WTC11 (cell line): ENCODE measurements at regions of chr14 and their contacts with region 1.

Region 1: DNA sequence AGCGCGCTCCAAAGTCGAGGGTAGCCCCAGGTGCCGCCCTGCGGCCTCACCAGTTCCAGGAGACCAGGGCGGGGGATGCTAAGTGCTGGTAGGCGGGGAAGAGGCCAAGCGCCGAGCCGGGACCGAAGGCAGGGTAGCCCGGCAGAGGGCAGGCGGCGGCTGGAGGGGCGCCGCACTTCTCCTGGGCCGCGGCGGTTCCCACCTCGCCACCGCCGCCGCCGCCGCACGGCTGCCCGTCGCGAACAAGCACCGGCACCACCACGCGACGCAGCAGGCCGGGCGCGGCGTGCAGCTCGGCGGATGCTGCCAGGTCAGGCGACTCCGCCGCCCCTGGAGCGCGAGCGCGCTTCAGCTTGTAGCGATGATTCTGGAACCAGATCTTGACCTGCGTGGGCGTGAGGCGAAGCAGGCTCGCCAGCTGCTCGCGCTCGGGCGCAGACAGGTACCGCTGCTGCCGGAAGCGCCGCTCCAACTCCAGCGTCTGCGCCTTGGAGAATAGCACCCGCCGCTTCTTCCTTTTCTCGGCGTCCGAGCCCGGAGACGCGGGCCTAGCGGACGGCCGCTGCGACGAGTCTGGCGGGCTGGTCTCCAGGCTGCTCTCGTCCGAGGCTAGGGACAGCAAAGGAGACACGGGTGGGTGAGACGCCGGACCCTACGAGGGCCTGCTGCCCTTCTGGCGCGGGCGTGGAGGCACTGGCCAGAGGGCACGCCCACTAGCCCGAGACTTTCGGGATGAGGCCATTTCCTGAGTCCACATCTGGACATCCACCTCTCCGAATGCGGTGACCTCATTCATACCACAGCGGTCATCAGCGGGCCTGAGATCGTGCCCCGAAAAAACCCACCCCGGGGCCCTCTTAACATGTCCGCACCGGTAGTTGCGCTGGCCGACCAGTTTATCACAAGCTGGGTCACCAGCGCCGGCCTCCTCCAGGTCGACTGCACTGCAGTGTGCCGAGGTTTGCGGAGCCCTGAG is 1.3 kb downstream of the NKX2-8 start:
- DNase-seq: peak; percentile 61
- ATAC-seq: peak; percentile 52
- H3K4me3 Mint-ChIP-seq: peak overlapping the region; percentile 60
- H3K27ac Mint-ChIP-seq: no peak overlapping the region
- H3K4me1 Mint-ChIP-seq: peaks cover 29% of the 10 kb centered on the region
- H3K27me3 Mint-ChIP-seq: no peaks in the 10 kb centered on the region; the same call in 1 of the 2 replicates
- CTCF ChIP-seq: no peak

Region 2: DNA sequence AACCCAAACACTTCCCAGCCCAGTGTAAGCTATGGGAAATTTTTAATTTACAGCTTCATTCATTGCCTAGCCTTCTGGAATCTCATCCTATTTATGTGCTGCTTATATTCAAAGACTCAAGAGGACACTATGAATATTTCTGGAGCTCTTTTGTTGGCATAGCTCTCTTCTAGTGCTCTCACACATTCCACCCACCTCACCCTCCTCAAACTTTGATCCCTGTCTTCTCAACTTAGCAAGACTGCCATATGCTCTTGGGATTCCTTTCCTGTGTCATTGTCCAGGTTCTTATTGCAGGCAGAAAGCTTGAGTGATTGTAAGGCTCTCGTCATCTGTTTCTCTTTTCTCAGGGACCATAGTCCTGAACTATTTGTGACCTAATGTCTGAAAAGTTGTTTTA is 43.1 kb before region 1 on chr14:
- CTCF ChIA-PET with region 1: no interaction called
- POLR2A ChIA-PET with region 1: no interaction called
- DNase-seq: no peak
- ATAC-seq: no peak
- H3K4me3 Mint-ChIP-seq: no peak overlapping the region
- H3K27ac Mint-ChIP-seq: no peak overlapping the region
- H3K4me1 Mint-ChIP-seq: no peaks in the 10 kb centered on the region
- H3K27me3 Mint-ChIP-seq: peaks cover 55% of the 10 kb centered on the region
- CTCF ChIP-seq: no peak

Region 3: DNA sequence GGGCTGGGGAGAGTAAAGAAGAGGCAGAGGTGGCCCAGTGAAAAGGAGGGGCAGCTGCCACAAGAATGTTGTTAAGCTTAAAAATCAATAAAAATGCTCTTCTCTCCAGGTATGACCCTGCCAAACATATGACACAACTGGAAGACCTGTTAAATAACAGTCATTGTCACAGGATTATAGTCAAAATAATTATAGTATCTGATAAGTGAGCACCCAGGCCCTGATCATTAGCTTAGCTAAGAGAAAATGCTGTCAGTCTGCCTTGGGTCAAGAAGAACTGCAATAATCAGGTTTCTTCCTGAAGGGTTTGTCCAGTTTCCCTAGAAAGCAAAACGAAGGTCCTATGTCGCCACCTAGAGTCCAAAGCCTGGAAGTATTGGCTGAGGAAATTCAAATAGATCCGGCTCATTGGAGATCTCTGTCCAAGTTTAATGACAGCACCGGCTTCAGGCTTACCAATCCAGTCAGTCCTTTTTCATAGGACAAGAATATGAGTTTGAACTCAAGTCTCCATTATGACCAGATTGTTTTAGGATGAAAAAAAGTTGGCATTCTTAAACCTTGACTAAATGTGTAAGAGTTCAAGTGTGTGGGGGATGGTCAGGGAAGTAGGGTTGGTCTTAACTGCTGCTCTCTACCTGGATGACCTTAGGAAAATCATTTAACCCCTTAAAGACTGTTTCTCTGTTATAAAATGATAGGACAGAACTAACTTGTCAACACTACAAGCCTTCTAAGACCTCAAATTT is 23.8 kb after region 1 on chr14:
- CTCF ChIA-PET with region 1: interaction called, 11 read pairs
- POLR2A ChIA-PET with region 1: no interaction called
- DNase-seq: peak; percentile 60
- ATAC-seq: peak; percentile 83
- H3K4me3 Mint-ChIP-seq: peak overlapping the region; percentile 57
- H3K27ac Mint-ChIP-seq: no peak overlapping the region
- H3K4me1 Mint-ChIP-seq: peaks cover 12% of the 10 kb centered on the region
- H3K27me3 Mint-ChIP-seq: peaks cover 39% of the 10 kb centered on the region
- CTCF ChIP-seq: peak; percentile 48

Region 4: GRCh38 chr14:36626151-36626550 is 45.0 kb after region 1 on chr14:
- CTCF ChIA-PET with region 1: no interaction called
- POLR2A ChIA-PET with region 1: no interaction called
- DNase-seq: no peak
- ATAC-seq: no peak
- H3K4me3 Mint-ChIP-seq: no peak overlapping the region
- H3K27ac Mint-ChIP-seq: no peak overlapping the region
- H3K4me1 Mint-ChIP-seq: peaks cover 6% of the 10 kb centered on the region; the same call in 1 of the 2 replicates
- H3K27me3 Mint-ChIP-seq: peaks cover 12% of the 10 kb centered on the region
- CTCF ChIP-seq: no peak

Region 5: DNA sequence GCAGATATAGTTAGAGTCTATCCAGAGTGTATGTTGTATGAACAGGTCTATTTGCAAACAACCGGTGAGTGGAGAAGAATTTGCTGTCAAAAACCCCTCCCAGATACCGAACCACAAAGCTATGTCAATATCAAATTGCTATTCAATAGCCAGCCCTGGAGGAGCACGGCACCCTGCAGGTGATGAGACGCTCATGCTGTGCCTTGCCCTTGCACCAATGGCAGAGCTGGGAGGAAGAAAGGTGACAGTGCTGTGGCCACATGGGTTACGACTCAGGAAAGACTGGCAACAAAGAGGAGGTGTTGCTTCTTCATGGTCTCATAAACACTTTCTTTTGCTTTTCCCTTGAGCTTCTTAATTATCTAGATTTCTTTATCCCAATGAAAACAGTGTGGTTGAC is 136.2 kb after region 1 on chr14:
- CTCF ChIA-PET with region 1: no interaction called
- POLR2A ChIA-PET with region 1: no interaction called
- DNase-seq: peak; percentile 24
- ATAC-seq: peak; percentile 87
- H3K4me3 Mint-ChIP-seq: no peak overlapping the region
- H3K27ac Mint-ChIP-seq: no peak overlapping the region
- H3K4me1 Mint-ChIP-seq: peaks cover 12% of the 10 kb centered on the region
- H3K27me3 Mint-ChIP-seq: no peaks in the 10 kb centered on the region
- CTCF ChIP-seq: no peak